AG04449 (cell line): ENCODE measurements at regions of chr7 and their contacts with region 1.

Region 1: GRCh38 chr7:95527033-95527775 is 41.5 kb downstream of the ASB4 start:
- DNase-seq: no peak
- H3K4me3 ChIP-seq: no peak overlapping the region
- CTCF ChIP-seq: peak; percentile 84

Region 2: GRCh38 chr7:95545078-95545498 is 17.9 kb after region 1 on chr7:
- CTCF ChIA-PET with region 1: interaction called, 69 read pairs
- POLR2A ChIA-PET with region 1: no interaction called
- DNase-seq: no peak
- H3K4me3 ChIP-seq: peak overlapping the region; percentile 24; the same call in 1 of the 2 replicates
- CTCF ChIP-seq: peak; percentile 61

Region 3: DNA sequence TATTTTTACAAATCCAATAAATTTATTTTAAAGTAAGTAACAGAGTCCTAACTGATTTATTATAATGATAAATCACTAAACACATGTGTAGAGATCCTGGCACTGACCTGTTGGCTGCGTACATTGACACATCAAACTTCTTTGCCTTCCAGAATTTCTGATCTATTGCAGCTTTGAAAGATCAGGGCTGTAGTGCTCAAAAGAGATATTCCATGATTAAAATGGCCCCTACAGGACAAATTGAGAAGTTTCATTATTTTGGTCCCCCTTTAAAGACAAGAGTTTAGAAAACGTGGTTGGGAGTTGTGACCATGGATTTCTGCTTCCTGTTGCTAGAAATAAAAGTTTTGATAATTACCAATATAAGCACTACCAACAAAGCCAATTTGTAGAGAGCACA is 156.8 kb after region 1 on chr7:
- CTCF ChIA-PET with region 1: interaction called, 556 read pairs
- POLR2A ChIA-PET with region 1: interaction called, 6 read pairs
- DNase-seq: no peak
- H3K4me3 ChIP-seq: no peak overlapping the region
- CTCF ChIP-seq: no peak

Region 4: DNA sequence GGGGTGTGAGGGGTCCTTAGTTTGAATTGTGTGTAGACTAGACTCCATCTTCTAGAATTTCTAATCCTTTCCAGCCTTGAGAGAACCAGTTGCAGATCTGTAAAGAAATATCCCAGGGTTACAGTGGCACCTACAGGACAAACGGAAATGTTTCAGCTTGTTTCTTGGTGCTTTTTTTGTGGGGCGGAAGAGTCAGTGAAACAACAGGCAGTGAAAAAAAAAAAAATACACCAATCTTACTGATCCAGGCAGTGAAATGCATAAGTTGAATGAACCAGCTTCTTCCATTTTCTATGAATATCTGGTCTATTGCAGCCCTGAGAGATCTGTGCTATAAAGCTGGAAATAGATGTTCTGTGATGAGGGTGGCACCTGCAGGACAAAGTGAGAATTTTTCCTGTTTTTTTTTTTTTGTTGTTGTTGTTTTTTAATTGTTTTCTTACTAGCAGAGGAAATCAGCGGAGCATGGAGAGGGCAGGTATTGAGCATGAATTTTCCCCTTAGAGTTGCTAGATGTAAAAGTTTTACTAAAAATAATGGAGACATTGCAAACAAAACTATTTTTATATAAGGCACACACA is 163.3 kb after region 1 on chr7:
- CTCF ChIA-PET with region 1: interaction called, 556 read pairs
- POLR2A ChIA-PET with region 1: interaction called, 6 read pairs
- DNase-seq: no peak
- H3K4me3 ChIP-seq: no peak overlapping the region
- CTCF ChIP-seq: peak; percentile 12